PC-3 (cell line): ENCODE measurements at regions of chr2 and their contacts with region 1.

Region 1: DNA sequence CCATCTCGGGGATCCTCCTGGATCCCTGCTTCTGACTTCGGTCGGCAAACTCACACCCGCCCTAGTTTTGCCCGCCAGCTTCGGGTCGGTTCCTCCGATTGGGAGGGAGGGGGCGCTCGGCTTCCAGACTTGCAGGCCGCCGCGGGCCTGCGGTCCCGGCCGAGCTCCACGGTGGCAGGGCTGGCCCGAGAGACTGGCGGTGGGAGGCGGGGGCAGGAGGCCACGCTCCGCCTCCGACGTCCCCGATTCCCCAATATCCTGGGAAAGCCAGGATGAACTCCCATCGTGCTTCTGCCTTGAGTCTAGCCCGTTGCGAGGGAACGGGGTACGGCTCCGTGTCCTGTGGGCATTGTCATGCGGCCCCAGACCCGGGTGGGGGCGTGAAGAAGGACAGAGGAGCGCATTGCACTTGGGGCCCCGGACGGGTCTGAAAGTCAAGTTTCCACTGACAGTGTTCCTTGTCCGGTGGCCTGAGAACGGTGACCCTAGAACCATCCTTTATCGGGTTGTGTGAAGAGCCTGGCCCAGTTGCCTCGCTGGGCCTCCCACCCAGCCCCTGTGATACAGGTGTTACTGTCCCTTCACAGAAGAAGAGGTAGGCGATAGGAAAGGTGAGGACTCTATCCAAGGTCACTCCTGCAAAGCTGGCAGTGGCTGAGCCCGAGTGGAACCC is 2.4 kb upstream of the INHBB start:
- DNase-seq: peak; percentile 92
- ATAC-seq: peak; percentile 63
- H3K4me3 ChIP-seq: peak overlapping the region; percentile 66
- H3K27ac ChIP-seq: peak overlapping the region; percentile 86
- H3K4me1 ChIP-seq: peaks cover 7% of the 10 kb centered on the region
- H3K27me3 ChIP-seq: no peaks in the 10 kb centered on the region
- CTCF ChIP-seq: peak; percentile 93

Region 2: GRCh38 chr2:120396013-120396885 is 52.7 kb after region 1 on chr2:
- CTCF ChIA-PET with region 1: interaction called, 4 read pairs
- POLR2A ChIA-PET with region 1: interaction called, 4 read pairs
- intact Hi-C with region 1: loop called (anchors 1 kb)
- DNase-seq: peak; percentile 39
- ATAC-seq: no peak
- H3K4me3 ChIP-seq: 0 out of 2 replicates have a peak overlapping the region, but pooled peaks have one; percentile 3
- H3K27ac ChIP-seq: peak overlapping the region; percentile 93
- H3K4me1 ChIP-seq: peaks cover 52% of the 10 kb centered on the region
- H3K27me3 ChIP-seq: no peaks in the 10 kb centered on the region
- CTCF ChIP-seq: no peak

Region 3: DNA sequence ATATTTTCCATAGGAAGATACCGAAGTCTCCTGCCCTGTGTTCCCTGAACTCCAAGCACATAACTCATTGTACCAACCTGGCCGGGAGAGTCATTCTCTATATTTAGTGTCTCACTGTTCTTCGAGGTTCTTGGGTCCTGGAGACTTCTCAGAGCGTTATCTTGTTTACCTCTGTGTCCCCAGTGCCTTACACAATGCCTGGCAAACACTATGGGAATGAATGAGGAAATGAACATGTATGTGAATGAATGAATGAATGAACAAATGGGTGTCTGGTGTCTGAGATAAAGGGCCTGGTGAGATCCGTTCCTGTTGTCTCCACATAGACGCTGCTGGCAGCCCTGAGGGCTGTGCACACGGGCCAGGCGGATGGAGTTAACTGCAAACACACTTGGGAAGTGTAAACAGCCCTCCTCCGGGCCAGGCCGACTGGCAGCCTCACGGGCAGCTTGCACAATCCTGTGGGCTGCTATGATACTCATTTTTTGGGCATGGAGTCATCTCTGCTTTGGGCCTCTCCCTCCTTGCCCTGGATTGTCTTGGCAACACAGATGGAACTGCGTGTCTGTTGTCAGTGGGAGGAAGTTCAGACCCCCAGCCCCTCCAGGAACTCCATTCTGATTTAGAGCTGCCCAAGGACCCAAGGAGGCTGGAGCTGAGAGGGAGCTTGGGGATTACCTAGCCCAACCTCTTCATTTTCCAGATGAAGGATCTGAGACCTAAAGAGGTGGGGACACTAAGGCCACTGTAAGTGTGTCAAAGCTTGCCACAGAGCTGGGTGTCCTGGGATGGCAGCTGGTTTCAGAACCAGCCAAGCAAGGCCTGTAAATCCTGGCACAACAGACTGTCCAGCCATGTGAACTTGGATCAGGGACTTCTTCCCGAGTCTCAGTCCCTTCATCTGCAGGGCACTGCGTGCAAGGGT is 126.7 kb after region 1 on chr2:
- CTCF ChIA-PET with region 1: no interaction called
- POLR2A ChIA-PET with region 1: no interaction called
- intact Hi-C with region 1: loop called (anchors 1 kb)
- DNase-seq: peak; percentile 97
- ATAC-seq: peak; percentile 80
- H3K4me3 ChIP-seq: no peak overlapping the region
- H3K27ac ChIP-seq: peak overlapping the region; percentile 83
- H3K4me1 ChIP-seq: peaks cover 55% of the 10 kb centered on the region
- H3K27me3 ChIP-seq: no peaks in the 10 kb centered on the region
- CTCF ChIP-seq: no peak

Region 4: DNA sequence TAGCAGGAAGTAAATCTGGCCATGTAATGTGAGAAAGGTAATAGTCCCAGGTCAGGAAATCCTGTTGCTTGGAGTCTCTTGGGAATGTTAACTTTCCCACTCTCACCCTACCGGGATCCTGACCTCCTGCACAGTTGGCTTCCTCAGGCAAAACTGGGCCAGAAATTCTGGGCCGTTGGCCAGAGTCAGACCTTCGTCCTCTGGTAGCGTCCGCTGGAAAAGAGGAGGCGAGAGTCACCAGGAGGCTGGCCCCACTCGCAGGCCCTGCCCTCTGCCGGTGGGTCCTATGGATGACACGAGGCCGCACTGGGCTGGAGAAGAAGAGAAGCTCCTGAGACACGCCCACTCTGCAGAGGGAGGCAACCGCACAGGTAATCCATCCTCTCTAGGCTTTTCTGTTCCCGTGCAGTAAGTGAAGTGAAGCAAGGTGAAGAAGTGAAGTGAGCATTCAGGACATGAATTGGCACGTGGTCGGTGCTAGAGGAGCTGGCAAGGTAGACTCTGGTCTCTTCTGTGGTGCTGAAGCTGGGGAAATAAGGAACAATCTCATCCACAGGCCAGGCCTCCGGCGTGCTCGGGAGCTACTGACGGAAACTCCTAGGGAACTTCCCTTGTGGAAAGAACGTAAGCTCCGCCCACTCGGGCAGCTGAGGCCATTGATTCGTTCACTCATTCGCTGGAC is 209.4 kb after region 1 on chr2:
- CTCF ChIA-PET with region 1: interaction called, 13 read pairs
- POLR2A ChIA-PET with region 1: interaction called, 3 read pairs
- intact Hi-C with region 1: loop called (anchors 1 kb)
- DNase-seq: peak; percentile 98
- ATAC-seq: peak; percentile 99
- H3K4me3 ChIP-seq: peak overlapping the region; percentile 53
- H3K27ac ChIP-seq: peak overlapping the region; percentile 83
- H3K4me1 ChIP-seq: peaks cover 19% of the 10 kb centered on the region
- H3K27me3 ChIP-seq: no peaks in the 10 kb centered on the region
- CTCF ChIP-seq: peak; percentile 87

Region 5: GRCh38 chr2:121076885-121077549 is 733.4 kb after region 1 on chr2:
- CTCF ChIA-PET with region 1: no interaction called
- POLR2A ChIA-PET with region 1: interaction called, 17 read pairs
- intact Hi-C with region 1: loop called (anchors 5 kb)
- DNase-seq: peak; percentile 81
- ATAC-seq: peak; percentile 48
- H3K4me3 ChIP-seq: peak overlapping the region; percentile 38; the same call in 1 of the 2 replicates
- H3K27ac ChIP-seq: no peak overlapping the region
- H3K4me1 ChIP-seq: peaks cover 30% of the 10 kb centered on the region
- H3K27me3 ChIP-seq: no peaks in the 10 kb centered on the region
- CTCF ChIP-seq: peak; percentile 96